ENCODE measurements at regions of chr2 and their contacts with region 1.

Region 1: DNA sequence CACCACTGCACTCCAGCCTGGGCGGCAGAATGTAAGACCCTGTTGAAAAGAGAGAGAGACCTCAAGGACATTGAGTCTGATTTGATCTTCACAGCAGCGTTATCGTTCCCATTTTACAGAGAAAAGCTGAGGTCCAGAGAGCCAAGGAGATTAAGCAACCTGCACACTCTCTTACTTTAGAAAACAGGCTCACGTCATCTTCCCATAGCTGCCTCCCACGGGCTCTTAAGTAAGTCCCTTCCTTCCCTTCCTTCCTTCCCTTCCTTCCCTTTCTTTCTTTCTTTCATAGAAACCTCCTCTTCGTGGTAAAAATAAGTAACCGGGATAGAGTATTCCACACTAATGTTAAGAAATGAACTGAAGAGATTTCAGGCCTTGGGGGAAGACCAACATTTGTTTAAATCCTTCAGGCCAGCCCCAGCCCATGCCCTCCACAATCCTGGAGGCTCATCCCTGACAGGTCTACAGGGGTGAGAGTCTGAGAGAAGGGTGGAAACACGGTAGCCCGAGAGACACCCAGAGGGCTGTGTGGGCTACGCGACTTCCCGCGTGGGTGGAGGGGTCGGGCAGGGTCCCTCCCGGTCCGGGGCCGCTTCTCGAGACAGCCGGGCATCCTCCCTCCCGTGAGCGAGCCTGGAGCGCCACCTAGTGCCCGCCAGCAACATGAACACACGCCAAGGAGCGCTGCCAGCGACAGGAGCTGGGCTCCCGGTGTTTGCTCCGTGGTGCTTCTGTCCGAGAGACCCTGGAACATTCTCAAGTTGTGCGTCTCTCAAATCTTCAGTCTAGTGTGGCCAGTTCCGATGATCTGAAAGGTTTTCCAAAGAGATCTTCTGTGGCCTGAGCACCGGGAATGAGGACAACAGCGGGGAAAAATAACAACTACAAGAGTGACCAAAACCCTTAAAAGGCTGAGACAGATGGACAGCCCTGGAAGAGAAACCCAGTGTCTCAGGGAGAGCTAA is 160.3 kb downstream of the INO80D start:
- DNase-seq: peak; percentile 89
- ATAC-seq: peak; percentile 97
- H3K4me3 Mint-ChIP-seq: peak overlapping the region; percentile 60
- H3K27ac Mint-ChIP-seq: no peak overlapping the region
- H3K4me1 Mint-ChIP-seq: peaks cover 24% of the 10 kb centered on the region
- H3K27me3 Mint-ChIP-seq: peaks cover 27% of the 10 kb centered on the region
- CTCF ChIP-seq: peak; percentile 96

Region 2: DNA sequence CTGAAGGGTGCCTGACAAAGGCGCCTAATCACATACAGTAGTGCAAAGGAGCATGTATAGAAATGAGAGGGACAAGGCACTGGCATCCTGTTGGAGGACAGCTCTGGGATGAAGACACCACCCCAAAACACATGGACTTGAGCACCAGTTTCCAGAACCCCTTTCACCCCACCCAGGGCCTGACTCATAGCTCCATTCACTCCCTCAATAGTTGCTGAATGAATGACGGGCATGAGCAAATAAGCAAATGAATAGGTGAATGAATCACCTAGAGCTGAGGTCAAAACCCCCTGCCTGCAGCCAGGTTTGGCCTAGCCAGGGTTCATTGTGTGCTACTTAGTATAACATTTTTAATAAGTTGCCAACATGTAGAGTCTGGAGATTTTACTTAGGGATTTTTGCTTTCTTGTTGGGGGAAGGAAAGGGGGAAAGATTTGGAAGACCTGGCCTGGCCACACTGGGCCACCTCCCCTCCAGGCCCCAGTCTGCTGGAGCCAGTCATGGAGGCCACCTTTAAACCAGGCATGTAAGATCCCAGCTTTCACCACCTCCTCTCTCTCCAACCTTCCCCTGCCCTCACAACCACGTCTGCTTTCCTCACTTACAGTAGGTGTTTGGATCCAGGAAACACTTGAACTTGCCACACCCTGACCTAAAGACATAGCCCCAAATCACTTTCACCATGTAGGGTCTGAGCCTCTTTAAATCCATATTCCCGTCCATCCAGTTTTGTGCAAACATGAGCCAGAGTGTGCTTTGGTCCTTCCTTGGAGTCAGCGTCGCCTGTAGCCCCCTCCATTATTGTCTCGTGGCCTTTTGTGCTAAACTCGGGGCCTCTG is 176.8 kb before region 1 on chr2:
- CTCF ChIA-PET with region 1: interaction called, 14 read pairs
- POLR2A ChIA-PET with region 1: no interaction called
- DNase-seq: no peak
- ATAC-seq: peak; percentile 87
- H3K4me3 Mint-ChIP-seq: no peak overlapping the region
- H3K27ac Mint-ChIP-seq: peak overlapping the region; percentile 35; the same call in 1 of the 2 replicates
- H3K4me1 Mint-ChIP-seq: peaks cover 30% of the 10 kb centered on the region
- H3K27me3 Mint-ChIP-seq: no peaks in the 10 kb centered on the region
- CTCF ChIP-seq: no peak

Region 3: DNA sequence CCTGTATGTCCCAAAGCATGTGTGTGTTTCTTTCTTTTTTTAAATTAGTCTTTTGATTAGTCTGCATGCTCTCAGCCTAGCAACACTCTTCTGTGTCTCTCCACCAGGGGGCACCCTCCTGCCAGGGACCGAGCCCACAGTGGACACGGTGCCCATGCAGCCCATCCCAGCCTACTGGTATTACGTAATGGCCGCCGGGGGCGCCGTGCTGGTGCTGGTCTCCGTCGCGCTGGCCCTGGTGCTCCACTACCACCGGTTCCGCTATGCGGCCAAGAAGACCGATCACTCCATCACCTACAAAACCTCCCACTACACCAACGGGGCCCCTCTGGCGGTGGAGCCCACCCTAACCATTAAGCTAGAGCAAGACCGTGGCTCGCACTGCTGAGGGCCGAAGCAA is 149.5 kb before region 1 on chr2:
- CTCF ChIA-PET with region 1: interaction called, 70 read pairs
- POLR2A ChIA-PET with region 1: no interaction called
- DNase-seq: peak; percentile 95
- ATAC-seq: peak; percentile 98
- H3K4me3 Mint-ChIP-seq: peak overlapping the region; percentile 7; the same call in 1 of the 2 replicates
- H3K27ac Mint-ChIP-seq: no peak overlapping the region
- H3K4me1 Mint-ChIP-seq: peaks cover 9% of the 10 kb centered on the region
- H3K27me3 Mint-ChIP-seq: no peaks in the 10 kb centered on the region; the same call in 1 of the 2 replicates
- CTCF ChIP-seq: peak; percentile 92

Region 4: DNA sequence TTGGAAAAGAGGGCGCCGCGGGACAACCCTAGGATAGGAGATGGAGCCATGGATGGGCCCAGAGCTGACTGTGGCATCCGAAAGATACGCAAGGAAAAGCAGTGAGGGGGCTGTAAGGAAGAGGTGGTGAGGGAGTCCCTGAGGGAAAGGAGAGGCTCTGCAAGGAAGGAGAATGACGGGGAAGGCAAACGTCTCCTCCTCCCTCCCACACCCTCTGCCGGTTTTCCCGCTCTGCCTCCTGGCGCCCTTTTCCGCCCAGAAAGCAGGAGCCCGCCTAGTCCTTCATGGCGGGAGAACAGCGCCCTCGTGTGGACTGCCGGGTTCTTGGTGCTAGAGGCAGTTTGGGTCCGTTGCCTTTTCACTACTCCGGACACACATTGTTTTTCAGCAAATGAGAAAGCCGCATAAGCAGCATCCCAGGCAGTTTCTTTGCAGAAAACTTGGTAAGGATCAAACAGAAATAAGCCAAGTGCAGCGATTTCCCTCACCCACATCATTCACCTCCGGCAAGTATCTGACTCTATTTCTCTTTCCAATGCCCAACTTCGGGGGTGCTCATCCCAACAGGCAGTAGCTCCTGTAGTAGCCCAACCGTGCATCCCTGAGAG is 40.1 kb before region 1 on chr2:
- CTCF ChIA-PET with region 1: interaction called, 29 read pairs
- POLR2A ChIA-PET with region 1: no interaction called
- DNase-seq: peak; percentile 96
- ATAC-seq: peak; percentile 95
- H3K4me3 Mint-ChIP-seq: no peak overlapping the region
- H3K27ac Mint-ChIP-seq: no peak overlapping the region
- H3K4me1 Mint-ChIP-seq: peaks cover 24% of the 10 kb centered on the region
- H3K27me3 Mint-ChIP-seq: peaks cover 3% of the 10 kb centered on the region; the same call in 1 of the 2 replicates
- CTCF ChIP-seq: peak; percentile 98

Region 5: DNA sequence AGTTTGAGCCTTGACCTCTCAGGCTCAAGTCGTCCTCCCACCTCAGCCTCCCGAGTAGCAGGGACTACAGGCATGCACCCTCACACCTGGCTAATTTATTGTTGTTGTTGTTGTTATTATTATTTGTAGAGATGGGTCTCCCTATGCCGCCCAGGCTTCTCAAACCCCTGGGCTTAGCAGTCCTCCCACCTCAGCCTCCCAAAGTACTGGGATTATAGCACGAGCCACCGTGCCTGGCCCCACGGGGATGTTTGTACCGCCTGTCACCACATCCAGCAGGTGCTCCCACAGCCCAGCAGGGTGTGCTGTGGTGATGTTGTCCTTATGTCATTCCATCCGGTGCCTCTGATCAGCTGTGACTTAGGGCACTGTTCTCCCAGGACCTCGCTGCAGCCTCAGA is 22.0 kb before region 1 on chr2:
- CTCF ChIA-PET with region 1: interaction called, 39 read pairs
- POLR2A ChIA-PET with region 1: no interaction called
- DNase-seq: peak; percentile 57
- ATAC-seq: peak; percentile 93
- H3K4me3 Mint-ChIP-seq: no peak overlapping the region
- H3K27ac Mint-ChIP-seq: no peak overlapping the region
- H3K4me1 Mint-ChIP-seq: no peaks in the 10 kb centered on the region
- H3K27me3 Mint-ChIP-seq: no peaks in the 10 kb centered on the region
- CTCF ChIP-seq: peak; percentile 36; the same call in 1 of the 2 replicates

Region 6: GRCh38 chr2:205947621-205948495 is 22.2 kb after region 1 on chr2:
- CTCF ChIA-PET with region 1: interaction called, 38 read pairs
- POLR2A ChIA-PET with region 1: no interaction called
- DNase-seq: peak; percentile 73
- ATAC-seq: peak; percentile 78
- H3K4me3 Mint-ChIP-seq: no peak overlapping the region
- H3K27ac Mint-ChIP-seq: no peak overlapping the region
- H3K4me1 Mint-ChIP-seq: peaks cover 23% of the 10 kb centered on the region
- H3K27me3 Mint-ChIP-seq: no peaks in the 10 kb centered on the region
- CTCF ChIP-seq: peak; percentile 77

Region 7: DNA sequence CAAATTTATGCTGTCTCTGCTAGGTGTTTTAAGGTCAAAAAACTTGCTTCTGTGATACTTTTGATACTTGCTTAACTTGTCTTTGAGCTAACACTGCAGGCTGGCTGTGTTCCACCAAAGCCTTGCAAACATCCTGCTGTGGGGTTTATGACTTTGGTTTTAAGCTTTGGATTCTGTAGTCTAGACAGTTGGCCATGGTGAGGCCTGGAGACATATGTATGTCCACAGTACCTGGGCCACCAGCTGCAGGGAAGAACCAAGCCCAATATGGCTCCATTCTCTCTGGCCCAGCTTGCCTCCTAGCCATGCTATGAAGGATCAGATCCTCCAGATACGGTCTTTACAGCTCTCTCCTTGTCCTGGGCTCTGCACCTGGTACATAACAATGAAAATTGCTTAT is 46.5 kb after region 1 on chr2:
- CTCF ChIA-PET with region 1: interaction called, 12 read pairs
- POLR2A ChIA-PET with region 1: no interaction called
- DNase-seq: no peak
- ATAC-seq: peak; percentile 43
- H3K4me3 Mint-ChIP-seq: no peak overlapping the region
- H3K27ac Mint-ChIP-seq: no peak overlapping the region
- H3K4me1 Mint-ChIP-seq: peaks cover 13% of the 10 kb centered on the region
- H3K27me3 Mint-ChIP-seq: no peaks in the 10 kb centered on the region
- CTCF ChIP-seq: no peak

Region 8: GRCh38 chr2:206127656-206128055 is 202.0 kb after region 1 on chr2:
- CTCF ChIA-PET with region 1: no interaction called
- POLR2A ChIA-PET with region 1: no interaction called
- DNase-seq: no peak
- ATAC-seq: peak; percentile 50
- H3K4me3 Mint-ChIP-seq: no peak overlapping the region
- H3K27ac Mint-ChIP-seq: no peak overlapping the region
- H3K4me1 Mint-ChIP-seq: no peaks in the 10 kb centered on the region
- H3K27me3 Mint-ChIP-seq: no peaks in the 10 kb centered on the region
- CTCF ChIP-seq: no peak